PC-3 (cell line): ENCODE measurements at regions of chr10 and their contacts with region 1.

Region 1: DNA sequence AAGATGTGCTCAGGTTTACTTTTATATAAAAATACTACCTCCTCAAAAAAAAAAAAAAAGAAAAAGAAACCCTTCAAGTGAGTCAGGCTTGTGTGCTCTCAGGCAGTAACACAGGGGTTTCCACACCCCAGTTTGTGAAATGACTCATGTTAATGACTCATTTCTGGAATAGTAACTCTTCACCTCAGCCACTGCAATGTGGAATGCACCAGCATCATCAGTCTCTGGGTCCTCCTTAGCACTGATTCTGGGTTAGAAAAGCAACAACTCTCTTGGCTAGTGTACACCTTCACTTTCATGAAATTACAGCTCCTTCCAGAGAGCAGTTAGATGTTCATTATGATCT is 110.6 kb downstream of the EMX2 start:
- DNase-seq: peak; percentile 92
- ATAC-seq: peak; percentile 100
- H3K4me3 ChIP-seq: no peak overlapping the region
- H3K27ac ChIP-seq: peak overlapping the region; percentile 73
- H3K4me1 ChIP-seq: peaks cover 15% of the 10 kb centered on the region
- H3K27me3 ChIP-seq: no peaks in the 10 kb centered on the region
- CTCF ChIP-seq: no peak

Region 2: DNA sequence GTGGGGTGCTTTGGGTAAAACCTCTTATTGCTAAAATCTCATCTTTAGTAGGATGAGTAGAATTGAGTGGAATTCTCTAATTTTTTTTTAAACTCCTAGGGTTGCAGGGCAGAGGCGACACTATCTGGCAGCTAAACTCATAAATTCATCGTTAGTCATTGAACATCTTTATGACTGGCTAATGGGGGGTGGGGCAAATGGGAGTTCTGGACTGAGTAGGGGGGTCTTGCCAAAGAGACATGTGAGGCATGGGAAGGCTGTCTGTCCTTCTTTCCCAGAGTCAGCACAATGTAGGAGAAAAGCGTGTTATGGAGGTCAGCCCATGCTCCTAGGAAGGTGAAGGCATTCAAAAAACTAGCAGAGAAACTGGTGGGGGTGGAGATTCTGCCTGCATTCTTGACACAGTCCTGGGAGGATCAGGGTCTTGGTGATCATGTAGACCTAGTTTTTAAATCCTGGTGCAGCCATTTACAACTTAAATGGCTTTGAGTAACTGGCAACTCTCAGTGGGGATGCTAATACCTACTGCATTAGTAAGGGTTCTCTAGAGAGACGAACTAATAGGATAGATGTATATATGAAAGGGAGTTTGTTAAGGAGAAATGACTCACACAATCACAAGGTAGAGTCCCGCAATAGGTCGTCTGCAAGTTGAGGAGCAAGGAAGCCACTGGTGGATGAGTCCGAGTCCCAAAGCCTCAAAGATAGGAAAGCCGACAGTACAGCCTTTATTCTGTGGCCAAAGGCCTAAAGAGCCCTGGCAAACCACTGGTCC is 62.9 kb before region 1 on chr10:
- CTCF ChIA-PET with region 1: no interaction called
- POLR2A ChIA-PET with region 1: no interaction called
- intact Hi-C with region 1: no loop called
- DNase-seq: no peak
- ATAC-seq: no peak
- H3K4me3 ChIP-seq: no peak overlapping the region
- H3K27ac ChIP-seq: no peak overlapping the region
- H3K4me1 ChIP-seq: no peaks in the 10 kb centered on the region
- H3K27me3 ChIP-seq: no peaks in the 10 kb centered on the region
- CTCF ChIP-seq: no peak

Region 3: GRCh38 chr10:117609095-117609795 is 43.9 kb before region 1 on chr10:
- CTCF ChIA-PET with region 1: no interaction called
- POLR2A ChIA-PET with region 1: no interaction called
- intact Hi-C with region 1: loop called (anchors 2 kb)
- DNase-seq: peak; percentile 93
- ATAC-seq: peak; percentile 98
- H3K4me3 ChIP-seq: no peak overlapping the region
- H3K27ac ChIP-seq: peak overlapping the region; percentile 28; the same call in 1 of the 2 replicates
- H3K4me1 ChIP-seq: peaks cover 17% of the 10 kb centered on the region
- H3K27me3 ChIP-seq: no peaks in the 10 kb centered on the region
- CTCF ChIP-seq: no peak